CD8-positive, alpha-beta T cell (primary cell): ENCODE measurements at regions of chr3 and their contacts with region 1.

Region 1: DNA sequence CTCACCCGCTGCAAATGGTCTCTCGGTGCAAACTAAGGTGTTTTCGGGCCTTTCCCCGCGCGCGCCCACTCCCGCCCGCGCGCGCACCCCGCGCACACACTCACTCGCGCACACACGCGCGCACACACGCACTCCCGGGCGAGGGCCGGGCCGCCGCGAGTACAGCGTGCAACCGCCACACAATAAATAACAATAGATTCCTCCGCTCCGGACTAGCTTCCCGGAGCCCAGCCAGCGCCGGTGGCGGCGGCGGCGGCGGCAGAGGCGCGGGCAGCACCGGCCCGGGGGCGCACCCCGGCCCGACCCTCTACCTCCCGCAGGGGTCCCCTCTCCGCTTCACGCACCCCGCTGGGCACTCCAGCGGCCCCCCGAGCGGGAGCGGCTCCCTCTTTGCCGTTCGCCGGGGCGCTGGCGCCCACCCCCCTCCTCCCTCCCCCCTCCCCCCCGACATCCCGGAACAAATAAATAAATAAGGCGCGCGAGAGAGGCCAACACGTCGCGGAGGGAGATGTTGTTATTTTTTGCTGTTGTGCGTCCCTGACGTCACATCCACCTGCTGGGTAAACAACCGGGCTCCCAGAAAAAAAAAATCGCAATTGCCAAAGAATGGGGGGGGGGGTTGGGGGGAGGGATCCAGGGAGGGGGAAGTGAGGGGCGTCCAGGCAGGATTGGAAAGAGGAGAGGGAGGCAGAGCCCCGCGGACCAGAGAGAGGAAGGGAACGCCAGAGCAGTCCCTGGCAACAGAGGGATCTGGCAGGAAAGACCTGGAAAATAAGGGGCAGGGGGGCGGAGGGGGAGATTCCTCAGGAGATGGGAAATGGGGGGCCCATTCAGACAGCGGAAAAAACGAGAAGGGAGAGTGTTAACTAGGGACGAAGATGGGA is at the start of gene FOXP1:
- DNase-seq: peak; percentile 41 to 90 (median 63)
- ATAC-seq: peak; percentile 53
- H3K4me3 ChIP-seq: peak within 1 kb of the TSS; percentile 73 to 75
- H3K4me3 Mint-ChIP-seq: peak within 1 kb of the TSS; percentile 94
- H3K27ac ChIP-seq: peak within 1 kb of the TSS; percentile 67 to 84
- H3K27ac Mint-ChIP-seq: peak within 1 kb of the TSS; percentile 97
- H3K4me1 ChIP-seq: peaks cover 14% of the 10 kb centered on the region
- H3K4me1 Mint-ChIP-seq: peaks cover 47% of the 10 kb centered on the region
- H3K27me3 ChIP-seq: no peaks in the 10 kb centered on the region
- H3K27me3 Mint-ChIP-seq: no peaks in the 10 kb centered on the region
- CTCF ChIP-seq: no peak
- total RNA-seq, gene FOXP1: 411 to 413 TPM

Region 2: DNA sequence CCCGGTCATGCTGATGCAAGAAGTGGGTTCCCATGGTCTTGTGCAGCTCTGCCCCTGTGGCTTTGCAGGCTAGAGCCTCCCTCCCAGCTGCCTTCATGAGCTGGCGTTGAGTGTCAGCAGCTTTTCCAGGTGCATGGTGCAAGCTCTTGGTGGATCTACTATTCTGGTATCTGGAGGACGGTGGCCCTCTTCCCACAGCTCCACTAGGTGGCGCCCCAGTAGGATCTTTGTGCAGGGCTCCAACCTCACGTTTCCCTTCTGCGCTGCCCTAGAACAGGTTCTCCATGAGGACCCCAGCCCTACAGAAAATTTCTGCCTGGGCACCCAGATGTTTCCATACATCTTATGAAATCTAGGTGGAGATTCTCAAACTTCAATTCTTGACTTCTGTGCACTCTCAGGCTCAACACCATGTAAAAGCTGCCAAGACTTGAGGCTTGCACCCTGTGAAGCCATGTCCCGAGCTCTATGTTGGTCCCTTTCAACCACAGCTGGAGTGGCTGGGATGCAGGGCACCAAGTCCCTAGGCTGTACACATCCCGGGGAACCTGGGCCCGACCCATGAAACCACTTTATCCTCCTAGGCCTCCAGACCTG is 1033.0 kb before region 1 on chr3:
- CTCF ChIA-PET with region 1: interaction called, 55 read pairs
- POLR2A ChIA-PET with region 1: no interaction called
- intact Hi-C with region 1: loop called (anchors 1 kb)
- DNase-seq: peak; percentile 43 to 82 (median 68)
- ATAC-seq: peak; percentile 76
- H3K4me3 ChIP-seq: no peak overlapping the region
- H3K4me3 Mint-ChIP-seq: no peak overlapping the region
- H3K27ac ChIP-seq: no peak overlapping the region
- H3K27ac Mint-ChIP-seq: no peak overlapping the region
- H3K4me1 ChIP-seq: no peaks in the 10 kb centered on the region
- H3K4me1 Mint-ChIP-seq: no peaks in the 10 kb centered on the region
- H3K27me3 ChIP-seq: no peaks in the 10 kb centered on the region
- H3K27me3 Mint-ChIP-seq: peaks cover 2% of the 10 kb centered on the region
- CTCF ChIP-seq: peak; percentile 60

Region 3: DNA sequence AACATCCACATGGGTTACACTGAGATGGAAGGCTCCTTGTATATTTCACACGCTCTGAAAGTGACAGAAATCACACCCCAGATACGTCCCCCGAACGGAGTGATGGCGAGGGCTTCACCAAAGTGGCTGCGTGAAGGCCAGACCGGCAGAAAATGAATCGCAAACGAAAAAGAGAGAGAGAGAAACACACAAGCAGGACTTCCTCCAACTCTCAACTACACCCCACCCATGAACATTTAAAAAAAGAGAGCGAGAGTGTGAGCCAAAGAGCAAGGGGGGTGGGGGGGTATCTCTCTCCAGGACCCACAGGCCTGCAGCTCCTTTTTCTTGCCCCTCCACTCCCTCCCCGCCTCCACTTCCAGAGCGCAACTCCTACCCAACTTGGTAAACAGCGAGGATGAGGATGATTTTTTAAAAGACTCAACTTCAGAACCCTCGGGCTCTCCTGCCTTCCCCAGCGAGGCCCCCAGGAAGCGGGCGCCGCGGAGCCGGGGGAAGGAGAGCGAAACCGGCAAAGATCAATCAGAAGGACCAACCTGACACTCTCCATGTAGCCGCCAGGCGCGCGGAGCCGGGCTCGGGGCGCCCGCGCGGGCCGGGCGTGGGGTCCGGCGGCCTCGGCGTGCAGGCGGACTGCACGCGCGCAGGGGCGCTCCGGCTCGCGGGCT is 519.4 kb before region 1 on chr3:
- CTCF ChIA-PET with region 1: interaction called, 3 read pairs
- POLR2A ChIA-PET with region 1: interaction called, 6 read pairs
- intact Hi-C with region 1: loop called (anchors 5 kb)
- DNase-seq: peak; percentile 48 to 86 (median 66)
- ATAC-seq: peak; percentile 43
- H3K4me3 ChIP-seq: peak overlapping the region; percentile 65 to 91
- H3K4me3 Mint-ChIP-seq: no peak overlapping the region
- H3K27ac ChIP-seq: peak overlapping the region; percentile 80 to 85
- H3K27ac Mint-ChIP-seq: no peak overlapping the region
- H3K4me1 ChIP-seq: peaks cover 79% of the 10 kb centered on the region
- H3K4me1 Mint-ChIP-seq: peaks cover 67% of the 10 kb centered on the region
- H3K27me3 ChIP-seq: no peaks in the 10 kb centered on the region
- H3K27me3 Mint-ChIP-seq: no peaks in the 10 kb centered on the region
- CTCF ChIP-seq: no peak

Region 4: DNA sequence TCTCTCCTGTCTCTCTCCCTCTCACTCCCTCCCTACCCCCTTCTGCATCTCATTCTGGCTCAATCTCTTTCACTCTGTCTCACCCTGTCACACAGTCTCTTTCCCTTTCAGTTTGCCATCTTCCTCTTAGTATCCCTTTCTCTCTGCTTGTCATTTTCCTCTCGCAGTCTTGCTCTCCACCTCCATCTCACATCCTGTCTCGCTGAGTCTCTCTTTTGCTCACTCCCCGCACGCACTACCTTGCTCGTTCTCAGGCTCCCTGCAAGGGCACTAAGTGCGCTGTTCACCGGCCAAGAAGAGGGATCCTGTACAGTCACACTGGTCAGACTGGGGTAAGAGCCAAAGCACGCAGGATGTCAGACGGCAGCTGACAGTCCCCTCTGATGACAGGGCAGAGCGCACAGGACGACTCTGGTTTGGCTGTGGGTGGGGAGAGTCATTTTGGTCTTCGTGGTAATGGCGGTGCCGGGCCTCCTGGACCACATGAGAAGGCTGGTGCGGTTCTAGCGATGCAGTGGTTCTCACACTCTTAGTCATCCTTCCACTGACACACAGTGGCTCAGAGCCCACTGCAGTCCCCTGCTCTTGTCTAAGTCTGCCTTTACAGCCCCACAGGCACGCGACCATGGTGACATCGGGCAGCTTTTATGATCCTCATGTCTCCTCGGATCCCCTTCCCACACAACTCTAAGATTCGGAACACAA is 357.1 kb before region 1 on chr3:
- CTCF ChIA-PET with region 1: no interaction called
- POLR2A ChIA-PET with region 1: no interaction called
- intact Hi-C with region 1: loop called (anchors 2 to 10 kb)
- DNase-seq: peak; percentile 57 to 88 (median 81)
- ATAC-seq: peak; percentile 75
- H3K4me3 ChIP-seq: peak overlapping the region; percentile 0 to 43
- H3K4me3 Mint-ChIP-seq: peak overlapping the region; percentile 73
- H3K27ac ChIP-seq: peak overlapping the region; percentile 18 to 63
- H3K27ac Mint-ChIP-seq: peak overlapping the region; percentile 97
- H3K4me1 ChIP-seq: peaks cover 56% of the 10 kb centered on the region
- H3K4me1 Mint-ChIP-seq: peaks cover 82% of the 10 kb centered on the region
- H3K27me3 ChIP-seq: no peaks in the 10 kb centered on the region
- H3K27me3 Mint-ChIP-seq: no peaks in the 10 kb centered on the region
- CTCF ChIP-seq: no peak

Region 5: GRCh38 chr3:71444028-71444860 is 139.6 kb before region 1 on chr3:
- CTCF ChIA-PET with region 1: interaction called, 3 read pairs
- POLR2A ChIA-PET with region 1: interaction called, 7 read pairs
- intact Hi-C with region 1: loop called (anchors 5 kb)
- DNase-seq: peak; percentile 49 to 95 (median 74)
- ATAC-seq: peak; percentile 77
- H3K4me3 ChIP-seq: peak overlapping the region in 1 of 2 experiments; percentile 6
- H3K4me3 Mint-ChIP-seq: peak overlapping the region; percentile 68
- H3K27ac ChIP-seq: peak overlapping the region; percentile 78 to 83
- H3K27ac Mint-ChIP-seq: peak overlapping the region; percentile 98
- H3K4me1 ChIP-seq: peaks cover 98% of the 10 kb centered on the region
- H3K4me1 Mint-ChIP-seq: peaks cover 97% of the 10 kb centered on the region
- H3K27me3 ChIP-seq: no peaks in the 10 kb centered on the region
- H3K27me3 Mint-ChIP-seq: no peaks in the 10 kb centered on the region
- CTCF ChIP-seq: no peak

Region 6: DNA sequence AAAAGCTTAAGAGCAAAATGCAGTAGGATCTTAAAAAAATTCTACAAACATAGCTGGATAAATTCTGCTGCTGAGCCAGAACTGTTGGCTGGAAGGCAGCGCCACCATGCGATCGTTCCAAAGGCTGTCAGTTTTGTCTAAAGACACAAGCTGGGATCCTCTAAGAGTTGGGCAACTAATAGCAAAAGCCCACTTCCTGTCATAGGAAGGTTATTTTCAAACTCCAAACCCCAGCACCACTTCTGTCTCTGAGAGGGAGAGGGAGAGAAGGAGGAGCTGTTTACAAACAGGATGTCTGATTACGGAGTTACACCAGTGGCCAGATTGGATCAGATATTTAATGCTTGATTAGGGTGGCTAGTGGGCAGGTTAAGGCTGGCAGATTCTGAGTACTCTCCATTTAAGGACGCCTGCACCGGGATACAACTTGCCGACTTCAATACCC is 97.4 kb after region 1 on chr3:
- CTCF ChIA-PET with region 1: no interaction called
- POLR2A ChIA-PET with region 1: no interaction called
- intact Hi-C with region 1: loop called in 1 of 2 experiments (anchors 2 kb)
- DNase-seq: peak in 6 of 9 experiments; percentile 10 to 50 (median 31)
- ATAC-seq: peak; percentile 29
- H3K4me3 ChIP-seq: no peak overlapping the region
- H3K4me3 Mint-ChIP-seq: no peak overlapping the region
- H3K27ac ChIP-seq: no peak overlapping the region
- H3K27ac Mint-ChIP-seq: peak overlapping the region; percentile 18
- H3K4me1 ChIP-seq: no peaks in the 10 kb centered on the region
- H3K4me1 Mint-ChIP-seq: peaks cover 10% of the 10 kb centered on the region
- H3K27me3 ChIP-seq: no peaks in the 10 kb centered on the region
- H3K27me3 Mint-ChIP-seq: no peaks in the 10 kb centered on the region
- CTCF ChIP-seq: peak; percentile 47